Natural killer cell (primary cell): ENCODE measurements at regions of chr16 and their contacts with region 1.

Region 1: DNA sequence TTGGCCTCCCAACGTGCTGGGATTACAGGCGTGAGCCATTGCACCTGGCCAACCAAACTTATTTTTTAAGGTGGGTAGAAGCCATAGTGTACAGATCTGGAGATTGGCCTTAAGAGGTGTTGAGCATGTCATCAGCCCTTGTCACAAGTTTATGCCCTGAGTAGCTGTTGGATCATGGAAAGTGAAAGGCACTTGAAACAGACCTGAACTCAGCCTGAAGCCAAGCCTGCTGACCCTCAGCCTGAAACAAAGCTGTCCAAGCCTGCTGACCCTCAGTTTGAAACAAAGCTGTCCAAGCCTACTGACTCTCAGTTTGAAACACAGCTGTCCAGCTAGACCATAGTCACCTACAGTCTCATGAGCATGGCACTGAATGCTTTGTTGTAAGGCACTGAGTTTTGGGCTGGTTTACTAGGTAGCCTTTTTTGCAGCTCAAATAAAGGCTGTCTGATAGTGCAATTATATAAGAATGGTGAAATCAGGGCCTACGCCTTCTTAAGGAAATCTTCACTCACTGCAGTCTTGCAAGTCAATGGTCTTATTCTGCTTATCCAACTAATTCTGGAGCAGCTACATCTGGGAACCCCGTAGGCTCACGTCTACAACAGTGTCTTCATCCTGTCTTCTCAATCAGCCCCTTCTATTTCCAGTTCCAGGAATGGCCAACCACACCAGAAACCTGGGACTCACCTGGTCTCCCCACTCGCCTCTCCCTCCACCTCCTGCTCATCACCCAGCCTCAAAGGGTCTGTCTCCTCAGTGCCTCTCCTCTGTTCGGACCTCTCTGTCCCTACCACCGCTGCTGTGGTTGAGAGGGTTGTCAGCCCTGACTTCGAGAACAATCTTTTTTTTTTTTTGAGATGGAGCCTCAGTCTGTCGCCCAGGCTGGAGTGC is 2.9 kb upstream of the NPIPB15 start:
- DNase-seq: peak in 1 of 2 donors; percentile 10
- ATAC-seq: no peak
- H3K4me3 ChIP-seq: no peak overlapping the region
- H3K4me3 Mint-ChIP-seq: no peak overlapping the region
- H3K27ac ChIP-seq: no peak overlapping the region
- H3K27ac Mint-ChIP-seq: peak overlapping the region in 1 of 2 donors; percentile 29
- H3K4me1 ChIP-seq: peaks cover 7% of the 10 kb centered on the region
- H3K4me1 Mint-ChIP-seq: peaks cover 0 to 5% of the 10 kb centered on the region in 2 donors
- H3K27me3 ChIP-seq: no peaks in the 10 kb centered on the region
- H3K27me3 Mint-ChIP-seq: no peaks in the 10 kb centered on the region
- CTCF ChIP-seq: no peak

Region 2: DNA sequence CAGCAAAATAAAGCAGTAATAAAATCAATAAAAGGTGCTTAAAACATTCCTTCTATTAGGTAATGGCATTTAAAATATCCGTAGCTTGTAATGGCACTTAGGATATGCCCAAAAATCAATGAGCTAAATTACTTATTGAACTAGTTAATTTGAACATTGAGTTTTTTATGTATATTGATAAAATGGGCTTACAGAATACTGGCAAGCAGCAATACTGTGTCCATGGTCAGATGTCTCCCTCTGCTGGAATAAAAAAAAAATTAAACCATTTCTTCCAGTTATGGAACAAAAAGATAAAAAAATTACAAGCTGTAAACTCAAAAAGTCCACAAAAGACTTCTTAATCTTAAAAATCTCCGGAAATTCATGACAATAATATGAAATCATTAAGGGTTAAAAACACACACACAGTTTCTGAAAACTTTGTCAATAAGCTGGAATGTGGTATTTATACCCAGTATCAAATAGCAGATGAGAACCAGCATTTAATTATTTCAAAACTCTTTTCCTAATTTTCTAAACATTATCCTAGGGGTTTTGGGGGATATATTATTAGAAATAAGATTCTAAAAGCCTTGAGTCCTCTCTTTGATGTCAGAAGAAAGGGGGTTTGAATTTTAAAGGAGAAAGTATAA is 98.1 kb before region 1 on chr16:
- intact Hi-C with region 1: no loop called
- DNase-seq: peak in 1 of 2 donors; percentile 14
- ATAC-seq: no peak
- H3K4me3 ChIP-seq: no peak overlapping the region
- H3K4me3 Mint-ChIP-seq: no peak overlapping the region
- H3K27ac ChIP-seq: no peak overlapping the region
- H3K27ac Mint-ChIP-seq: no peak overlapping the region
- H3K4me1 ChIP-seq: no peaks in the 10 kb centered on the region
- H3K4me1 Mint-ChIP-seq: no peaks in the 10 kb centered on the region
- H3K27me3 ChIP-seq: no peaks in the 10 kb centered on the region
- H3K27me3 Mint-ChIP-seq: peaks cover 22 to 28% of the 10 kb centered on the region in 2 donors
- CTCF ChIP-seq: no peak

Region 3: DNA sequence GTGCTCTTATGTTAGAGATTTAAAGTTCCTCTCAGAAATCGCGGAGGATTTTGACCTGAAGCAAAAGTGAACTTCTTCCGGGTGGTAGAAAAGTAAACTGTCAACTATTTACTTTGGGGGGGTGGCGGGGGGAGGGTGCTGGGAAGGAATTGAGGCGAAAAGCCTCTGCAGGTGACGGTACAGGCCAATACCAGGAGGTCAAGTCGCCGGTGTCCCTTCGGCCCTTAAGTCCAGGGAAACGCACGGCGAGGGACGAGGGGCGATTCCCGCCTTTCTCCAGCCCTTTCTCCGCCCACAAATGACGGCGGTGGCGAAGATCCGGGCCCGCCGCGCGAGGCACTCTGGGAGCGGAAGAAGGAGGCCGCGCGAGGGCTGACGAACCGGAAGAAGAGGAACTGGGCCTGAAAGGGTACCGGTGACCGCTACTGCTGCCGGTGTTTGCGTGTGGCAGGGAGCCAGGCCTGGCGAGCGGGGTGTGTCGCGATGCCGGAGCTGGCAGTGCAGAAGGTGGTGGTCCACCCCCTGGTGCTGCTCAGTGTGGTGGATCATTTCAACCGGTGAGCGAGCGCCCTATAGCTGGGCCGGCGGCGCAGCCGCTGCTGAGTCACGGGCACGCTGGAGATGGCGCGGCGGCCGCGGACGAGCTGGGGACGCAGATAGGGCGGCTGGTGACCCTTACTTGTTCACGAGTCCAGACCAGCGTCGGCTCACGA is 76.6 kb before region 1 on chr16 and contains the start of gene PSMD7:
- intact Hi-C with region 1: loop called (anchors 1 kb)
- DNase-seq: peak; percentile 88 to 93
- ATAC-seq: peak; percentile 92 to 97 (median 95)
- H3K4me3 ChIP-seq: peak within 1 kb of the TSS; percentile 95
- H3K4me3 Mint-ChIP-seq: peak within 1 kb of the TSS; percentile 98
- H3K27ac ChIP-seq: peak within 1 kb of the TSS; percentile 93
- H3K27ac Mint-ChIP-seq: peak within 1 kb of the TSS; percentile 97 to 98
- H3K4me1 ChIP-seq: peaks cover 14% of the 10 kb centered on the region
- H3K4me1 Mint-ChIP-seq: peaks cover 14 to 20% of the 10 kb centered on the region in 2 donors
- H3K27me3 ChIP-seq: no peaks in the 10 kb centered on the region
- H3K27me3 Mint-ChIP-seq: no peaks in the 10 kb centered on the region
- CTCF ChIP-seq: no peak
- total RNA-seq, gene PSMD7: 81.0 to 89.2 (median 81.7) TPM

Region 4: DNA sequence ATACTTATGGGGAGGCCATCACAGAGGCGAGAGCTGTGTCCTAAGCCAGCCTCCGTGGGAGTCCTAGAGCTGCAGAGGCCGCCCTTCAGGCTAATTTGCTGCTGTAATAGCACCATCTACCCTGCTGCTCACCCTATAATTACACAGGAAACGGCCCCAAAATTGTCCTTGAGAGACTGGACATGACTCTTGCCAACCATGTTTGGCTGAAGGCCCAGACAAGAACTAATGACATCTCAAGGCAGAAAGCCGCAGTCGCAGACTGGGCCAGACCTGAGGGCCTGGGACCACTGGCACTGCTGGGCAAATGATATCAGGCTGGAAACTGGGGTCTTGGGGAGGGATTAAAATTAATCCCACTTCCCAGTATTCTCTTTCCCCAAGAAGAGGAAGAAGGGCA is 52.5 kb before region 1 on chr16:
- intact Hi-C with region 1: no loop called
- DNase-seq: no peak
- ATAC-seq: no peak
- H3K4me3 ChIP-seq: no peak overlapping the region
- H3K4me3 Mint-ChIP-seq: no peak overlapping the region
- H3K27ac ChIP-seq: no peak overlapping the region
- H3K27ac Mint-ChIP-seq: no peak overlapping the region
- H3K4me1 ChIP-seq: no peaks in the 10 kb centered on the region
- H3K4me1 Mint-ChIP-seq: no peaks in the 10 kb centered on the region
- H3K27me3 ChIP-seq: no peaks in the 10 kb centered on the region
- H3K27me3 Mint-ChIP-seq: no peaks in the 10 kb centered on the region
- CTCF ChIP-seq: no peak